CD8-positive, alpha-beta T cell (primary cell): ENCODE measurements at regions of chr6 and their contacts with region 1.

Region 1: GRCh38 chr6:160992061-160992979 is 751 bp downstream of the MAP3K4 start:
- DNase-seq: peak in 8 of 9 experiments; percentile 11 to 75 (median 38)
- ATAC-seq: peak; percentile 64
- H3K4me3 ChIP-seq: peak overlapping the region; percentile 85 to 94
- H3K4me3 Mint-ChIP-seq: peak overlapping the region; percentile 96
- H3K27ac ChIP-seq: peak overlapping the region; percentile 78 to 82
- H3K27ac Mint-ChIP-seq: peak overlapping the region; percentile 90
- H3K4me1 ChIP-seq: peaks cover 32% of the 10 kb centered on the region
- H3K4me1 Mint-ChIP-seq: peaks cover 47% of the 10 kb centered on the region
- H3K27me3 ChIP-seq: no peaks in the 10 kb centered on the region
- H3K27me3 Mint-ChIP-seq: no peaks in the 10 kb centered on the region
- CTCF ChIP-seq: peak; percentile 49

Region 2: GRCh38 chr6:159761873-159762680 is 1230.2 kb before region 1 on chr6 and contains the start of gene ACAT2:
- CTCF ChIA-PET with region 1: no interaction called
- POLR2A ChIA-PET with region 1: no interaction called
- intact Hi-C with region 1: loop called in 1 of 2 experiments (anchors 5 kb)
- DNase-seq: peak; percentile 81 to 96 (median 91)
- ATAC-seq: peak; percentile 86
- H3K4me3 ChIP-seq: peak within 1 kb of the TSS; percentile 85 to 99
- H3K4me3 Mint-ChIP-seq: peak within 1 kb of the TSS; percentile 96
- H3K27ac ChIP-seq: peak within 1 kb of the TSS; percentile 97 to 99
- H3K27ac Mint-ChIP-seq: peak within 1 kb of the TSS; percentile 97
- H3K4me1 ChIP-seq: peaks cover 16% of the 10 kb centered on the region
- H3K4me1 Mint-ChIP-seq: peaks cover 29% of the 10 kb centered on the region
- H3K27me3 ChIP-seq: no peaks in the 10 kb centered on the region
- H3K27me3 Mint-ChIP-seq: no peaks in the 10 kb centered on the region
- CTCF ChIP-seq: no peak
- total RNA-seq, gene ACAT2: 23.3 to 24.1 TPM

Region 3: DNA sequence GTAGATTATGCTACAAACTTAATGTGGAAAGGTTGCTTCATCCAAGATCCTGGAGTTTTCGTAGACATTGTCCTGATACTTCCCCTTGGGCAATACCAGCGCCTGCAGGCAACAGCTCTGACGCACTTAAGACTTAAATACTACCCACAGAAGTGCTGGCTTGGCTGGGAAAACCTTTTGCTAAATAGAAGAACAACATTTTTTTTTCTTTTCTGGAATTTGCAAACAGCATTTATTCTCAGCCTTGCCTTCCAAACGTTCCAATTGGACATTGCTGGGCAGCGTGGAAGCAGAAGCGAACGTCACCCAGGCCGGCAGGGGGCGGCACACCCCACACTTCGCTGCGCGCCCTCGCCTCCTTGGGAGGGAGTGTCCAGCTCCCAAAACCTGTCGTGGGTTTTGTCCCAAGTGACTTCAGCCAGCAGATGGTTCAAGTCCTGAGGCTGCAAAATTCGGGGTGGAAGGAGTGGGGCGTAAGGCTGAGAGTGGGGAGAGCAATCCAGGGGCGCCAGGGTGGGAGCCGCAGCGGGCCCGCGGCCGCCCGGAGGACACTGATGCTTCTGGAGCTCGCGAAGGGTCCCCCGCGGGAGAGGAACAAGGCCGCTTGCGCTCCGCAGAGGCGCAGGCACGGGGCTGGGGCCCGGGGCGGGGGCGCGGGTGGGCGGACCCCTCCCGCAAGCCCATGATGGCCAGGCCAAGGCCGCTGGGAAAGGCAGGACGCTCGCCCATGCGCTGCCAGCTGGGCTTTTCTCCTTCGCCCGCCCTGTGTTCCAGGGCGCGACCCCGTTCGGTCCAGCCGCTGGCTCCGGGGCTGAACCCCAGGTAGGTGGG is 61.6 kb before region 1 on chr6:
- CTCF ChIA-PET with region 1: no interaction called
- POLR2A ChIA-PET with region 1: no interaction called
- intact Hi-C with region 1: loop called in 1 of 2 experiments (anchors 1 kb)
- DNase-seq: peak; percentile 5 to 72 (median 58)
- ATAC-seq: peak; percentile 68
- H3K4me3 ChIP-seq: peak overlapping the region in 1 of 2 experiments; percentile 41
- H3K4me3 Mint-ChIP-seq: peak overlapping the region; percentile 36
- H3K27ac ChIP-seq: no peak overlapping the region
- H3K27ac Mint-ChIP-seq: no peak overlapping the region
- H3K4me1 ChIP-seq: peaks cover 5% of the 10 kb centered on the region
- H3K4me1 Mint-ChIP-seq: peaks cover 5% of the 10 kb centered on the region
- H3K27me3 ChIP-seq: peaks cover 0 to 2% of the 10 kb centered on the region in 2 experiments
- H3K27me3 Mint-ChIP-seq: peaks cover 37% of the 10 kb centered on the region
- CTCF ChIP-seq: peak; percentile 85

Region 4: GRCh38 chr6:161074496-161075121 is 82.3 kb after region 1 on chr6:
- CTCF ChIA-PET with region 1: no interaction called
- POLR2A ChIA-PET with region 1: no interaction called
- intact Hi-C with region 1: loop called in 1 of 2 experiments (anchors 5 kb)
- DNase-seq: no peak
- ATAC-seq: no peak
- H3K4me3 ChIP-seq: no peak overlapping the region
- H3K4me3 Mint-ChIP-seq: no peak overlapping the region
- H3K27ac ChIP-seq: no peak overlapping the region
- H3K27ac Mint-ChIP-seq: peak overlapping the region; percentile 76
- H3K4me1 ChIP-seq: peaks cover 16% of the 10 kb centered on the region
- H3K4me1 Mint-ChIP-seq: peaks cover 9% of the 10 kb centered on the region
- H3K27me3 ChIP-seq: no peaks in the 10 kb centered on the region
- H3K27me3 Mint-ChIP-seq: no peaks in the 10 kb centered on the region
- CTCF ChIP-seq: no peak

Region 5: DNA sequence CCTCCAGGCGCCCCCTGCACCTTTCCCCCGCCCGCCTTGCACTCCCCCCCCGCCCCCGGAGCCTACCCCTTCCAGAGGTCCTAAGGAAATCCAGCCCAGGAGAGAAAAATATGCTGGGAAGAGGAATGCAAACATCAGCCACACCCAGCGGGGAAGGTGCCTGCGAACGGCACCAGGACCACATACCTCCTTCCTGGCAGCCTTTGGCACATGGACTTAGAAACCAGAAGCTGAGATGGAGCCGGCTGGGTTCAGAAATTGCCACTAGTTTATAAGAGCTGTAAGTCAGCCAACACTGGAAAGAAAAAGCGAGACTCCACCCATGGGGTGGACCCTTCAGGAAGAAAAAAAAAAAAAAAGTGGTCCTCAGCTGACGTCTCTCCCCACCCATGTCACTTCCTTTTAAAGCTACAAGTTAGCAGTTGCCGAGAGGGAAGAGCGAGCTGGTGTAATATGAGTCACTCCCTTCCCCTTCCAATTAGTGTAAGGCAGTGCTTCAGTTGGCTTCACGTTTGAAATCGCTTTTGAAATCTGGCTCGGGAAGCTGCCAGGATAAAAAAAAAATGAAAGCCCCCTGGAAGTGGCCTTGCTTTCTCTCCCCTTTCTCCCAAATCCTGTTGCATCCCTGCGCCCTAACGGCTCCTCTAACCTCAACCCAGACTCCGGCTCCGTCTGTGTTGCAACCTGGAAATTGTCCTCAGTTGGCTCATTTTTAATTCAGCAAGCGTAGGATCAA is 281.6 kb after region 1 on chr6 and contains the start of gene AGPAT4:
- CTCF ChIA-PET with region 1: no interaction called
- POLR2A ChIA-PET with region 1: interaction called, 5 read pairs
- intact Hi-C with region 1: loop called (anchors 1 kb)
- DNase-seq: peak; percentile 39 to 95 (median 63)
- ATAC-seq: peak; percentile 94
- H3K4me3 ChIP-seq: peak within 1 kb of the TSS; percentile 61 to 72
- H3K4me3 Mint-ChIP-seq: peak within 1 kb of the TSS; percentile 90
- H3K27ac ChIP-seq: peak within 1 kb of the TSS; percentile 61 to 85
- H3K27ac Mint-ChIP-seq: peak within 1 kb of the TSS; percentile 91
- H3K4me1 ChIP-seq: peaks cover 14% of the 10 kb centered on the region
- H3K4me1 Mint-ChIP-seq: peaks cover 21% of the 10 kb centered on the region
- H3K27me3 ChIP-seq: no peaks in the 10 kb centered on the region
- H3K27me3 Mint-ChIP-seq: no peaks in the 10 kb centered on the region
- CTCF ChIP-seq: no peak
- total RNA-seq, gene AGPAT4: 1.2 to 2.8 TPM

Region 6: DNA sequence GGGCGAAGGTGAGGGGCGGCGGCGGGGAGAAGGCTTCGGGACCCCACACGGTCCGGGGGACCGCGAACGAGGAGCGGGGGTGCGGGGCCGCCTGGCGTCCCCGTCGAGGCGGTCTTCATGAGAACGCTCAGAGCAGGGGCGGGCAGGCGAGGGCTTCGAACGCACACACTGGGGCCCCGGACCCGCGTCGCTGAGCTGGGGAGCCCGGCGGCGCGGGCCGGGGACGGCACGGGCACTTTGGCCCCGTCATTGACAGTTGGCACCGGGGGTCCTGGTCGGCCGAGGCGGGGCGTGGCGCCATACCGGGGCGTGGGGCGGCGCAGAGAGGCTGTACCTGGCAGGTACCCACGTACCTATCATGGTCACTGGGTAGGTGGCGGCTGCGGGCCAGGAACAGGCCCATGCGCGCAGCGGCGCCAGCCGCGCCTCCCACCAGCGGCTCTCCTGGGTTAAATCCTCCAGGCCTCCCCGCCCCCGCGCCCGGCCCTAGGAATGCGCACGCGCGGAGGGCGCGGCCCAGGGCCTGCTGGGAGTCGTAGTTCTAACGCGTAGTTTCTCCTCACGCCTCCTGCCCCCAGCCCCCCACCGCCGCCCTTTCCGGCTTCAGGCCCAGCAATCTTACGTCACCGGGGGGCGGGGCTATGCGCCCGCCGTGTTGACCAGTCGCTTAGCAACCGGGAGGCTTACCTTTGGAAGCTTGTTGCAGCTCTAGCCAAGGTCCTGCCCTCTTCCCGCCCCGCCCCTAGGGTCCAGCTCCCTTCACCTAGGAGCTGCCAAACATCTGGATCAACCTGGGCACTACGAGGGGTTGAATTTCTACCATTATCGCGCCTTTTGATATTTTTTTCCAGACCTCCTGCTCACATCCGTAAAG is 1735.2 kb after region 1 on chr6 and contains the starts of genes PACRG and PRKN:
- CTCF ChIA-PET with region 1: no interaction called
- POLR2A ChIA-PET with region 1: no interaction called
- intact Hi-C with region 1: loop called (anchors 2 to 5 kb)
- DNase-seq: peak; percentile 95 to 99 (median 97)
- ATAC-seq: peak; percentile 93
- H3K4me3 ChIP-seq: peak within 1 kb of the TSS; percentile 54 to 87
- H3K4me3 Mint-ChIP-seq: peak within 1 kb of the TSS; percentile 96
- H3K27ac ChIP-seq: peak within 1 kb of the TSS; percentile 68 to 73
- H3K27ac Mint-ChIP-seq: peak within 1 kb of the TSS; percentile 94
- H3K4me1 ChIP-seq: peaks cover 12% of the 10 kb centered on the region
- H3K4me1 Mint-ChIP-seq: peaks cover 16% of the 10 kb centered on the region
- H3K27me3 ChIP-seq: no peaks in the 10 kb centered on the region
- H3K27me3 Mint-ChIP-seq: no peaks in the 10 kb centered on the region
- CTCF ChIP-seq: no peak
- total RNA-seq, gene PACRG: 0.57 to 0.75 TPM
- total RNA-seq, gene PRKN: 3.4 to 3.6 TPM